ENCODE measurements at regions of chr5 and their contacts with region 1.

Region 1: GRCh38 chr5:90474235-90475109 is at the starts of genes MBLAC2 and POLR3G:
- DNase-seq: peak; percentile 91

Region 2: GRCh38 chr5:90409318-90410177 is 64.9 kb before region 1 on chr5 and contains the start of gene CETN3:
- CTCF ChIA-PET with region 1: no interaction called
- POLR2A ChIA-PET with region 1: interaction called, 12 read pairs
- DNase-seq: peak; percentile 88

Region 3: GRCh38 chr5:90440644-90441043 is 33.8 kb before region 1 on chr5:
- CTCF ChIA-PET with region 1: interaction called, 4 read pairs
- POLR2A ChIA-PET with region 1: interaction called, 11 read pairs
- DNase-seq: no peak

Region 4: DNA sequence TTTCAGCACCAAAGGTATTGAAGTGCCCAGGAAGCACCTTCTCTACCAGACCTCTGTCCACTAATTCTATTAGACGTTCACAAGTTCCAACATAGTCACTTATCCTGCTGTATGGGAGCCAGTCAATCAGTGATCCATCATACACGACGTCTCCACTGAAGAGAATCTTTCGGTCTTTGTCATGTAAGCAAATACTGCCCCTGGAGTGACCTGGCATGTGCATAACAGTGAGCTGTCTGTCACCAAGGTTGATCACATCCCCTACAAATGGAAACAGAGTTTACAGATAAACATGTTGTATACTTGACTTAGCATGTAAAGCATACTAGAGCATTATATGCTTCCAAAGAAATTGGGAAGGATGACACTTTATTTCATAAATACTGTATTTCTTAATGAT is 13.2 kb before region 1 on chr5:
- CTCF ChIA-PET with region 1: interaction called, 3 read pairs
- POLR2A ChIA-PET with region 1: interaction called, 12 read pairs
- DNase-seq: no peak

Region 5: DNA sequence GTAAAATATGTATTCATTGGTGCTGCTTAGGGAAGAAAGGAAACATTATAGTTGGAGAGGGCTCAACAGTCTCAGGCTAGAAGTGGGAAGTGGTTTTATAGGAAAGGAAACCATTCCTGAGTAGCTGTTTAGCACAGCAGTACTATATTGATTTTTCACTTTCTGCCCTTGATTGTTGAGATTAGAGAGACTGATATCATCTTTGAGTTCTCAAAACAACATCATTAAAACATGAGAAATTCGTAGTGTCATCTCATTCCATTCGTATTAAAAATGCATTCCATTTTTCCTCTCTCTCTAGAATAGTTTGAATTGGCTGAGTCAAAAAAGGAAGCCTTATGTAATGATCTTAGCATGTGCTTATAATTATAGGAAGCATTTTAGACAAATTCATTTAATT is 14.3 kb after region 1 on chr5:
- CTCF ChIA-PET with region 1: interaction called, 3 read pairs
- POLR2A ChIA-PET with region 1: interaction called, 10 read pairs
- DNase-seq: no peak

Region 6: GRCh38 chr5:90518661-90519060 is 44.2 kb after region 1 on chr5:
- CTCF ChIA-PET with region 1: no interaction called
- POLR2A ChIA-PET with region 1: no interaction called
- DNase-seq: no peak

Region 7: GRCh38 chr5:90529194-90529938 is 54.9 kb after region 1 on chr5 and contains the start of gene LYSMD3:
- CTCF ChIA-PET with region 1: interaction called, 3 read pairs
- POLR2A ChIA-PET with region 1: interaction called, 17 read pairs
- DNase-seq: peak; percentile 99

Region 8: DNA sequence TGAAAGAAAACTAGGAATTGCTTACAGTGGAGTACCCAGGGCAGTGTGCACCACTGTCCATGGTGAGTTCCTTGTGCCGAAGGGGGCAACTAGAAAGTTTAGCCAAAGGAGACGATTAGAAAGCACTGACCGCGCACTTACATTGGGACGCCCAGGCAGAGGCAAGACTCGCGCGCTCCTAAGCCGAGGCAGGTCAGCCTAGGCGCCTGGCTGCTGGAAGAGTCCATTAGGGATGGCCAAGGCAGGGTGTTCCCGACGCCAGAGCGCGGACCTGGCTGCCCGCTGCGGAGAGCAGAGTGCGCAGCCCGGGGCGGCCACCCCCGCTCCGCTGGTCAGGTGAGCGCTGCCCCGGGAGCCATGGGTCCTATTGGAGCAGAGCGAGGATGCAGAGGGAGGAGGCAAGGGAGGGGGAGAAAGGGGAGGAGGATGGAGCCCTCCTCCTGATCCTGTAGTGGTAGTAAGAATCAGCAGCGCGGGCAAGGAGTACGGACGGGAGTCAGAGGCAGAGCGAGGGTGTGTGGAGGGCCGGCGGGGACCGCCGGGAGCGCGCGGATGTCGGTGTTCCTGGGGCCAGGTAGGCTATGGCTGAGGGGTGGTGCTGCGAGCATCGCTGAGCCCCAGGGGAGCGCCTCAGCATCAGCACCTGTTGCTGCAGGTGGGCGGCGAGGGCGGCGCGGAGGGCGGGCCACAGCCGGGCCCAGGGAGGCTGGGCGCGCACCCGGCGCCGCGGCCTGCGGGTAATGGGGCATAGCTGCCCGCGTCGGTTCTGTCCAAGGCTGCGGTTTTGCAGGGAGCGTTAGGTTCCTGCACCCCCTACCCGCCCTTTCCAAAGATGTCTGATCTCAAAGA is 84.1 kb after region 1 on chr5 and contains the start of gene ADGRV1:
- CTCF ChIA-PET with region 1: no interaction called
- POLR2A ChIA-PET with region 1: interaction called, 11 read pairs
- DNase-seq: peak; percentile 92